CD4-positive, alpha-beta memory T cell (primary cell): ENCODE measurements at regions of chrX and their contacts with region 1.

Region 1: DNA sequence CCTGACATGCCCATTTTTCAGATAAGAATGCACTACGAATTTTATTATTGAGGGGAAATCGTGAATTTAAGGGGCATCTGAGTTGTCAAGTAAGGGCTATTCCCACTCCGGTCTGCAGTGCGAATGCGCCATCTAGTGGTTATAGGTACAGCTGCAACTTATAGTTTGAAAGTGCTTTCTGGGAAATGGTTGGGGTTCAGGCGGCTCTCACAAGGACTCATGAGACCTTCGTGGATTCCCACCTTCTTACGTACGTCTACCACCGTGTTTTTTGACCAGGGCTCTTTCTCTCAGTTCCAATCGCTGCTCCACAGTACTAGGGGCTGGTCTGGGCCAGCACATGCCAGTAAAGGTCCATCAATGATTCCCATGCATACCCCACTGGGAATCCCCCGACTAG is 12.3 kb downstream of the MSL3 start:
- DNase-seq: peak; percentile 65 to 70 (median 69)
- H3K4me3 ChIP-seq: no peak overlapping the region
- H3K4me3 Mint-ChIP-seq: no peak overlapping the region
- H3K27ac ChIP-seq: no peak overlapping the region
- H3K27ac Mint-ChIP-seq: peak overlapping the region; percentile 54 to 91 (median 82)
- H3K4me1 ChIP-seq: peaks cover 37% of the 10 kb centered on the region
- H3K4me1 Mint-ChIP-seq: peaks cover 17 to 36% (median 28%) of the 10 kb centered on the region in 4 donors
- H3K27me3 ChIP-seq: no peaks in the 10 kb centered on the region
- H3K27me3 Mint-ChIP-seq: no peaks in the 10 kb centered on the region

Region 2: DNA sequence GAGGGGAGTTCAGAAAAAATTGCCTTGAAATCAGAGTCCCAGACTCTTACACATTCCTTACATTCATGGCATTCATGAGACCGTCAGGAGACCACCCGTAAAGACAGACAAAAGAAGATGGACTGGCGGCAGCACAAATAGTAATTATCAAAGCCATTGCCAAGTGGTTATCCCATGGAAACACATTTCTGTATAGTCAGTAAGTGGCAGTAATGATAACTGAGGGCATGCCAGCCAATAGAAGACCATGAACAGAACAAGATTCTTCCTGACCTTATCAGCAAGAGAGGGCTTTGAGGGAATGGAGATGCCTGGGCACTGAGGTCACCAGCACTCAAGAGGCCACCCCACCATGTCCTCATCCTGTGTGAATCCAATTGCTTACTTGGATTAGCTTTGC is 780.9 kb before region 1 on chrX:
- CTCF ChIA-PET with region 1: no interaction called
- POLR2A ChIA-PET with region 1: no interaction called
- intact Hi-C with region 1: no loop called
- DNase-seq: no peak
- H3K4me3 ChIP-seq: no peak overlapping the region
- H3K4me3 Mint-ChIP-seq: peak overlapping the region in 1 of 8 donors; percentile 10
- H3K27ac ChIP-seq: no peak overlapping the region
- H3K27ac Mint-ChIP-seq: no peak overlapping the region
- H3K4me1 ChIP-seq: no peaks in the 10 kb centered on the region
- H3K4me1 Mint-ChIP-seq: no peaks in the 10 kb centered on the region
- H3K27me3 ChIP-seq: no peaks in the 10 kb centered on the region
- H3K27me3 Mint-ChIP-seq: no peaks in the 10 kb centered on the region

Region 3: GRCh38 chrX:11111038-11111851 is 659.1 kb before region 1 on chrX and contains the start of gene HCCS:
- CTCF ChIA-PET with region 1: no interaction called
- POLR2A ChIA-PET with region 1: no interaction called
- intact Hi-C with region 1: loop called (anchors 5 kb)
- DNase-seq: peak; percentile 81 to 88 (median 85)
- H3K4me3 ChIP-seq: peak within 1 kb of the TSS; percentile 52 to 86
- H3K4me3 Mint-ChIP-seq: peak within 1 kb of the TSS in 3 of 8 donors; percentile 92 to 95 (median 94)
- H3K27ac ChIP-seq: peak within 1 kb of the TSS; percentile 93
- H3K27ac Mint-ChIP-seq: peak within 1 kb of the TSS; percentile 96 to 98 (median 97)
- H3K4me1 ChIP-seq: peaks cover 20% of the 10 kb centered on the region
- H3K4me1 Mint-ChIP-seq: peaks cover 7 to 31% (median 22%) of the 10 kb centered on the region in 4 donors
- H3K27me3 ChIP-seq: no peaks in the 10 kb centered on the region
- H3K27me3 Mint-ChIP-seq: peaks cover 0 to 1% of the 10 kb centered on the region in 2 donors
- total RNA-seq, gene HCCS: 12.8 to 15.2 TPM

Region 4: GRCh38 chrX:11724122-11725017 is 46.0 kb before region 1 on chrX:
- CTCF ChIA-PET with region 1: interaction called, 3 read pairs
- POLR2A ChIA-PET with region 1: no interaction called
- intact Hi-C with region 1: loop called (anchors 1 kb)
- DNase-seq: peak in 4 of 5 donors; percentile 17 to 33 (median 23)
- H3K4me3 ChIP-seq: no peak overlapping the region
- H3K4me3 Mint-ChIP-seq: peak overlapping the region in 1 of 8 donors; percentile 10
- H3K27ac ChIP-seq: no peak overlapping the region
- H3K27ac Mint-ChIP-seq: no peak overlapping the region
- H3K4me1 ChIP-seq: no peaks in the 10 kb centered on the region
- H3K4me1 Mint-ChIP-seq: no peaks in the 10 kb centered on the region
- H3K27me3 ChIP-seq: no peaks in the 10 kb centered on the region
- H3K27me3 Mint-ChIP-seq: peaks cover 0 to 2% of the 10 kb centered on the region in 2 donors